Activated T-helper 1 cell treated with anti-CD3 and anti-CD28 coated beads, Interleukin-12 subunit alpha, Interleukin-12 subunit beta, Interleukin-2, Interleukin-4 antibody, amounts not matched to agents 30 ng/mL and 10 ng/mL and 1 ng/mL, durations not matched to agents 14 hours and 24 hours and 36 hours (primary cell): ENCODE measurements at regions of chr10 and their contacts with region 1.

Region 1: DNA sequence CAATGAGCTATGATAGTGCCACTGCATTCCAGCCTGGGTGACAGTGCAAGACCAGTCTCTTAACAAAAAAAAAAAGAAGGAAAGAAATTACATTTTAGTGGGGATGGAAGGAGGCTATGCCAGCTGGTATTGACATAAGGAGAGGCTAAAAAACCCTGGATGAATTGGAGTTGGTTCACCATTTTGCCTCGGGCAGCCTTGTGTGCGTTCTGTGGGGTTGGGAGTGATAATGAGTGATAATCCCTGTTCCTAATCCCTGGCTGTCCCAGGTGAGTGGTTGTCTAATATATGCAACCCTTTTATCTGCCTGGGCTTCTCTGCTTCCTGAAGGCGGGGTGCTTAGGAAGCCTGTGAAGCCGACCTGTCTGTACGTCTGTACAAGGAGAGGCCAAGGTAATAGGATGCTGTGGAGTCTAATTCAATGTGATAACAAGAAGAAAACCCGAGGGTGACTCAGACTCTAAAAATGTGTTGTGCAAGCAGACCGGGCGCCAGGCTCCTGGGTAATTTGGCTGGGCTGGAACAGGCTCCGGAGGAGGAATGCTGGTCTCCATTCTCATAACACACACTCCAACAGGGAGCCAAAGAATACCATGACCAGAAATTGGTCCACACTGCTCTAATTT is 43.5 kb downstream of the THNSL1 start:
- DNase-seq: no peak
- H3K4me3 Mint-ChIP-seq: no peak overlapping the region
- H3K27ac Mint-ChIP-seq: no peak overlapping the region
- H3K4me1 Mint-ChIP-seq: peaks cover 30% of the 10 kb centered on the region
- H3K27me3 Mint-ChIP-seq: no peaks in the 10 kb centered on the region

Region 2: DNA sequence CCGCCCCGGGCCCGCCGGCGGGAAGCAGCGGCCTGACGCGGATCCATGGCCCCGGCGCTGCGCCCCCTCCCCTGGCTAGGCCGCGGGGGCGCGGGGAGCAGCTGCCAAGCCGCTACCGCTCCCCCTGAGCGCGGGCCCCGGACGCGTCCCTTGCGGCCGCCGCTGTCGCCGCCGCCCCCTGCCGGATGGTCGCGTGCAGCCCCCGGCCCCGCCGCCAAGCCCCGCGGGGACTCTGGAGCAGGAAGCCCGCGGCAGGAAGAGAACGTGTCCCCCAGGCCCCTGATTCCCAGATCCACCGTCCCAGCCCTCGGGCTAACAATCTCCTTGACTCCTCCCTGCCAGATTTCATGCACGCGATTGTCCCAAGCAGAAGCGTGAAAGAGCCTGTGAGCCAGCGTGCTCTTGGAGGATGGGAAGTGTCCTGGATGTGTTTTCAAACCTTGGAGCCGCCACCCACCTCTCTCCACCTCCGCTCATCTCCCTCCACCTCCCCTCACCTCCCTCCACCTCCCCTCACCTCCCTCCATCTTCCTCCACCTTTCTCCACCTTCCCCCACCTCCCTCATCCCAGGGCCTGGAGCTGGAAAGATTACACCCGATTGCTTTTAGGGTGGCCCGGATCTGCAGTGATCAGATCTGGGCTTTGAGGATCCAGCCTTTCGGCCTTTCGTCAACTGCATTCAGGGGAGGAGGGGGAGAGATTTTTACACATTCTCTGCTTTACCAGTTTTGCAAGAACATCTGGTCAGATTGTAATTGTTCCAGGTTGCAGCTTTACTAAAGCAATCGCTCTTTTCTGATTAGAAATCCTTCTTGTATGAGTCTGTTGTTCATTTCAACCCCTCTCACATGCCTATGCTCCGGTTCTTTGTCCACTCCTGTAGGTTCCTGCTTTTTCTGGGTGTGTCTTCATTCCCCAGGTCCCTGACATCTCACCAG is 106.9 kb before region 1 on chr10:
- intact Hi-C with region 1: loop called (anchors 10 kb)
- DNase-seq: peak; percentile 7
- H3K4me3 Mint-ChIP-seq: peak overlapping the region; percentile 79
- H3K27ac Mint-ChIP-seq: no peak overlapping the region
- H3K4me1 Mint-ChIP-seq: peaks cover 16% of the 10 kb centered on the region
- H3K27me3 Mint-ChIP-seq: no peaks in the 10 kb centered on the region

Region 3: DNA sequence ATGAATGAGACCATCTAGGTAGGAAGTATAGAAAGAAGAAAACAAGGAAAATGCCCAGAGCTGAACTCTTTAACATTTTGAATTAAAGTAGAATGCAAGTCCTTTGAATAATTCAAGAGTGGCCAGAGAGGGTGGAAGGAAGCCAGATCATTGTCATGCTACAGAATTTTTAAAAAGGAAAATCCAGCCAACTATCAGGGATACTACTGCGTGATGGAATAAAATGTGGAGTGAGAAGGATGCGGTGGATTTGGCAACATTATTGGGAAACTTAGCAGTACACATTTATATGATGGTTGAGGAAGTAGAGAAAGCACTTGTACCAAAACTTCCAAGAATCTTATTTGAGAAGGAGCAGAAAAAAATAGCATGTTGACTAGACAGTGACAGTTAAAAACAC is 376.6 kb after region 1 on chr10:
- intact Hi-C with region 1: no loop called
- DNase-seq: no peak
- H3K4me3 Mint-ChIP-seq: no peak overlapping the region
- H3K27ac Mint-ChIP-seq: no peak overlapping the region
- H3K4me1 Mint-ChIP-seq: no peaks in the 10 kb centered on the region
- H3K27me3 Mint-ChIP-seq: no peaks in the 10 kb centered on the region